Mammary epithelial cell (primary cell): ENCODE measurements at regions of chr3 and their contacts with region 1.

Region 1: DNA sequence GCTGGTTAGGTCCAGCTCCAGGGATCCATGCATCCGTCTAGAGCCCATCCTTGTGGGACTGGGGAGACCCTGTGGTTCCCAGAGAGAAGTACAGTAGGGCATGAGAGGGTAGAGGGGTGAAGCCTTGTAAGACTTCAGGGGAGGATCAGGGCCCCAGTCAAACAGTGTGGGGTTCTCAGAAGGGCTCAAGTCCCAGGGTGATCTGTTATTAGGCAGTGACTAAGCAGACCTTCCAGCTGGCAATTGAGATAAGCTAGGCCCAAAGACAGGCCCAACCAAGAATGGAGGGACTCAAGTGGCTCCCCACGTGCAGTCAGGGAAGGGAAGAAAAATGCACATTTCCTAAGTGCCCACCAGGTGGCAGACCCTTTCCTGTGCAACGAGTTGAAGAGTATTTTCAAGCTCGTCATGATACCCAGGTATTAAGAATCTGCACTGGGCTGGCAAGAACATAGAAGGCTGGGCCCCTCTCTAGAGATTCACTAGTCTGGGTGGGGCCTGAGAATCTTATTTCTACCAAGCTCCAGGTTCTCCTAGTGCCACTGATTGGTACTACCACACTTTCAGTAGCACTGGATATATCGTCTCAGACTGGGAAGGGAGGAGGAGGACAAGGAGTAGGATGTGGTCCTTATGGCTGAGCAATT is 240.8 kb downstream of the NR1D2 start:
- DNase-seq: peak; percentile 58
- H3K4me3 ChIP-seq: no peak overlapping the region
- H3K27ac ChIP-seq: no peak overlapping the region
- H3K4me1 ChIP-seq: no peaks in the 10 kb centered on the region
- H3K27me3 ChIP-seq: no peaks in the 10 kb centered on the region
- CTCF ChIP-seq: peak; percentile 64 to 66

Region 2: DNA sequence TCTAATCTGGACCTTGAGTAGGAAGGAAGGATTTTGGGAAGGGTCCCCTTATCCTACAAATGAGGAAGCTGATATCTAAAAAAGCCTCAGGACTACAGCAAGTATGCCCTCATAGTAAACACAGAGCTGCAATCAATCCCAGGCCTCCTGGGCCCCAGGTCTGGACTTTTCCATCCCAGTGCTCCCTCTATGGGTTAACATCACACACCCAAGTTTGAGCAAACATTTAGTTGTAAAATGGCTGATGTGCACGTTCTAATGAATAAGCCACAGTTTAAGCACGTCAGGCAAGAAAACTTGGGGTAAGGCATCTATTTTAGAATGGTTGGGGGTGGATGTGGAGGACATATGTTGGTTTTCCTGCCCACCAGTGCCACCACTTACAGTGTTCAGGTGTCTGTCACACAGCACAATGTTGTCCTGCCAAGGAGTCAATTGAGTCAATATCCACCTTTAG is 424.4 kb before region 1 on chr3:
- CTCF ChIA-PET with region 1: no interaction called
- dilution Hi-C with region 1: no loop called
- in situ Hi-C with region 1: no loop called
- intact Hi-C with region 1: no loop called
- DNase-seq: peak; percentile 44
- H3K4me3 ChIP-seq: no peak overlapping the region
- H3K27ac ChIP-seq: no peak overlapping the region
- H3K4me1 ChIP-seq: no peaks in the 10 kb centered on the region
- H3K27me3 ChIP-seq: no peaks in the 10 kb centered on the region
- CTCF ChIP-seq: peak; percentile 45 to 78

Region 3: GRCh38 chr3:23999012-23999641 is 186.7 kb before region 1 on chr3:
- CTCF ChIA-PET with region 1: no interaction called
- dilution Hi-C with region 1: no loop called
- in situ Hi-C with region 1: no loop called
- intact Hi-C with region 1: loop called (anchors 1 kb)
- DNase-seq: peak; percentile 33
- H3K4me3 ChIP-seq: no peak overlapping the region
- H3K27ac ChIP-seq: no peak overlapping the region
- H3K4me1 ChIP-seq: peaks cover under 1% of the 10 kb centered on the region
- H3K27me3 ChIP-seq: no peaks in the 10 kb centered on the region
- CTCF ChIP-seq: peak; percentile 96 to 100

Region 4: DNA sequence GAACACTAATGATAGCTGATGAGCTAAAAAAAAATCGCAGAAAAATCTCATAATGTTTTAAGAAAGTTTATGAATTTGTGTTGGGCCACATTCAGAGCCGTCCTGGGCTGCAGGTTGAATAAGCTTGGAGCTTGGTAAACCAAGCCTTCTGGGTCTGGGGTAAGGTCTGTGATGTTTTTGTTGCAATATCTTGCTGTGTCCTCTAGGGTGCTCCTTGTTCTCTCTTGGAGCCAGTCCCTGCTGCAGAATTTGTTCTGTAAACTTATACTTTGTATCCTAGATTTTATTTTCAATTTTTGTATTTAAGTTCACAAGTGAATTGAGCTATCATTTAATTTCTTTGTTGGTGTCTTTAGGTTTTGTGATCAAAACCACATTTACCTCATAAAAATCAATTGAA is 97.1 kb before region 1 on chr3:
- CTCF ChIA-PET with region 1: no interaction called
- dilution Hi-C with region 1: no loop called
- in situ Hi-C with region 1: no loop called
- intact Hi-C with region 1: loop called (anchors 5 kb)
- DNase-seq: peak; percentile 20
- H3K4me3 ChIP-seq: no peak overlapping the region
- H3K27ac ChIP-seq: no peak overlapping the region
- H3K4me1 ChIP-seq: no peaks in the 10 kb centered on the region
- H3K27me3 ChIP-seq: no peaks in the 10 kb centered on the region
- CTCF ChIP-seq: peak; percentile 70 to 74